ENCODE measurements at regions of chr4 and their contacts with region 1.

Region 1: GRCh38 chr4:91359714-91360051 is 944.1 kb upstream of the GRID2 start:
- DNase-seq: no peak
- H3K4me3 Mint-ChIP-seq: no peak overlapping the region
- H3K27ac Mint-ChIP-seq: peak overlapping the region; percentile 100
- H3K4me1 Mint-ChIP-seq: peaks cover 28% of the 10 kb centered on the region
- H3K27me3 Mint-ChIP-seq: no peaks in the 10 kb centered on the region
- CTCF ChIP-seq: no peak

Region 2: GRCh38 chr4:91256043-91256442 is 103.6 kb before region 1 on chr4:
- CTCF ChIA-PET with region 1: no interaction called
- intact Hi-C with region 1: loop called (anchors 5 kb)
- DNase-seq: peak; percentile 74
- H3K4me3 Mint-ChIP-seq: peak overlapping the region; percentile 13
- H3K27ac Mint-ChIP-seq: peak overlapping the region; percentile 40
- H3K4me1 Mint-ChIP-seq: peaks cover 16% of the 10 kb centered on the region
- H3K27me3 Mint-ChIP-seq: no peaks in the 10 kb centered on the region
- CTCF ChIP-seq: no peak

Region 3: DNA sequence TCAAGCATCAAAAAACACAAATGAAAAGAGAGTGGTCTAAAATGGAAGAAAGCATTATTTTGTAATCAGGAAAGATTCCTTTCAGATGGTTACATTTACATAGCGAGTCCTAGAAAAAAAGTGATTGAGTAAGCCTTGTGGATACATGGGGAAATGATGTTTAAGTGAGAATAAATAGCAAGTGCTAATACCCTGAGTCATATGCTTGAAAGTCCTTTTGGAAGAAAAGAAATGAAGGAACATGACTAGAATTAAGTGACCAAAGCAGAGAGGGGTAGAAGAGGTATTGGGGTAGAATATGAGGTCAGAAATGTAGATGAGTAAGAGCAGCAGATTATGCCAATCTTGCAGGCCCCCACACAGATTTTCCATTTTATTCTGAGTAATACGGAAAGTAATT is 129.3 kb after region 1 on chr4:
- CTCF ChIA-PET with region 1: no interaction called
- intact Hi-C with region 1: no loop called
- DNase-seq: no peak
- H3K4me3 Mint-ChIP-seq: no peak overlapping the region
- H3K27ac Mint-ChIP-seq: no peak overlapping the region
- H3K4me1 Mint-ChIP-seq: no peaks in the 10 kb centered on the region
- H3K27me3 Mint-ChIP-seq: no peaks in the 10 kb centered on the region
- CTCF ChIP-seq: no peak

Region 4: GRCh38 chr4:91502365-91502764 is 142.7 kb after region 1 on chr4:
- CTCF ChIA-PET with region 1: no interaction called
- intact Hi-C with region 1: loop called (anchors 10 kb)
- DNase-seq: peak; percentile 19
- H3K4me3 Mint-ChIP-seq: no peak overlapping the region
- H3K27ac Mint-ChIP-seq: no peak overlapping the region
- H3K4me1 Mint-ChIP-seq: no peaks in the 10 kb centered on the region
- H3K27me3 Mint-ChIP-seq: no peaks in the 10 kb centered on the region
- CTCF ChIP-seq: peak; percentile 31

Region 5: DNA sequence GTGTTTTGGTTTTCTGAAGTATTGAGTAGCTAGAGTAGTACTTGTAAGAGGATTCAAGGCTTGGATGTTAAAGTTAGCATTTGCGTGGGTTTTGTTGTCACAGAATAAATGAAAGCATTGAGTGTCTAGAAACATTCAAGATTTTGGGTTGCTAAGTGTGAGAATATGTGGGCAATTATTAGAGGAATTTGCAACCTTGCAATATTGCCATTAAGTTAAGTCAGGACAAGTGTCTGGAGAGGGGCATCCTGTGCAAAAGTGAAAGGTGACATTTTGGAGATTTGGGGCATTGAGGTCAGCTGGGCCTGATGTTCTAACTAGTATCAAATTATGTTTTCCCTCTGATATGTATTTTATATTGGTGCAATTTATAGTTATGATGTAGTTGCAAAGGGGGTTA is 410.2 kb after region 1 on chr4:
- CTCF ChIA-PET with region 1: no interaction called
- intact Hi-C with region 1: no loop called
- DNase-seq: no peak
- H3K4me3 Mint-ChIP-seq: no peak overlapping the region
- H3K27ac Mint-ChIP-seq: no peak overlapping the region
- H3K4me1 Mint-ChIP-seq: no peaks in the 10 kb centered on the region
- H3K27me3 Mint-ChIP-seq: no peaks in the 10 kb centered on the region
- CTCF ChIP-seq: no peak